ENCODE measurements at regions of chr10 and their contacts with region 1.

Region 1: GRCh38 chr10:117431160-117431559 is 55.9 kb upstream of the PDZD8 start:
- DNase-seq: peak; percentile 73
- H3K4me3 Mint-ChIP-seq: no peak overlapping the region
- H3K27ac Mint-ChIP-seq: no peak overlapping the region
- H3K4me1 Mint-ChIP-seq: no peaks in the 10 kb centered on the region
- H3K27me3 Mint-ChIP-seq: no peaks in the 10 kb centered on the region
- CTCF ChIP-seq: peak; percentile 36

Region 2: GRCh38 chr10:116892907-116893685 is 538.1 kb before region 1 on chr10:
- CTCF ChIA-PET with region 1: no interaction called
- POLR2A ChIA-PET with region 1: no interaction called
- intact Hi-C with region 1: no loop called
- DNase-seq: no peak
- H3K4me3 Mint-ChIP-seq: no peak overlapping the region
- H3K27ac Mint-ChIP-seq: no peak overlapping the region
- H3K4me1 Mint-ChIP-seq: peaks cover 19% of the 10 kb centered on the region
- H3K27me3 Mint-ChIP-seq: no peaks in the 10 kb centered on the region
- CTCF ChIP-seq: no peak

Region 3: DNA sequence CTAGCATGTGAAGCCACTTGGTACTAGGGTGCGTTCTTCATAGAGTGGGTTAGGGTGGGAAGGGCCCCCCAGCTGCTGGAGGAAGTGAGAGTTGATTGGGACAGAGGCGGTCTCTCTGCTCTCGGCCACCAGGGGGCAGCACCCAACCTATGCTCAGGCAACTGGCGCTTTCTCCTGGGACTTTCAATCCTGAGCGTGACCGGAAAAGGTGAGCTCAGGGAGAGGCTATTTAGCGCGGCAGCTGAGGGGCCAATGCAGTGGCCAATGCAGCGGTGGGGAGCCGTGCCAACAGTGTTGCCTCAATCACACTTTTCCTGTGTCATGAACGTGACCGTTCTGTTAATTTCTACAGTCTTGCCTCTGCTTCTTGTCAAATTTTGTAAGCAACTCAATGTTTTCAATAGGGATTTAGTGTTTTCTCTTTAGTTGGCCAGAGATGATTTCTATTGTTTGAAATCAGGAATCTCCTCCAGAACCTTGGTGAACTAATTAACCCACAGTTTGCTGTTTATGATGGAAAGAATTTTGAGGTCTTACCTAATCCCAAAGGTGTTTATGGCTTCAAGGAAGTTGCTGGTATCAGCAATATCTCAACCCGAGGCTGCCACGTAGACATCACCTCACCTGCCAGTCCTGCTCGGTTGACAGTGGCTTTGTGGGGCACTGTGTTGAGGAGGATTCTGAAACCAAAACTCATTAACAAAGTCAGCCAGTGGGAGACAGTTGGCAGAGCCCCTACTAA is 12.0 kb after region 1 on chr10:
- CTCF ChIA-PET with region 1: interaction called, 48 read pairs
- POLR2A ChIA-PET with region 1: interaction called, 5 read pairs
- intact Hi-C with region 1: no loop called
- DNase-seq: peak; percentile 97
- H3K4me3 Mint-ChIP-seq: peak overlapping the region; percentile 29
- H3K27ac Mint-ChIP-seq: no peak overlapping the region
- H3K4me1 Mint-ChIP-seq: peaks cover 29% of the 10 kb centered on the region
- H3K27me3 Mint-ChIP-seq: no peaks in the 10 kb centered on the region
- CTCF ChIP-seq: peak; percentile 86

Region 4: GRCh38 chr10:117472872-117473271 is 41.7 kb after region 1 on chr10:
- CTCF ChIA-PET with region 1: interaction called, 25 read pairs
- POLR2A ChIA-PET with region 1: no interaction called
- intact Hi-C with region 1: loop called (anchors 1 kb)
- DNase-seq: no peak
- H3K4me3 Mint-ChIP-seq: no peak overlapping the region
- H3K27ac Mint-ChIP-seq: no peak overlapping the region
- H3K4me1 Mint-ChIP-seq: peaks cover 7% of the 10 kb centered on the region
- H3K27me3 Mint-ChIP-seq: peaks cover 13% of the 10 kb centered on the region
- CTCF ChIP-seq: no peak

Region 5: GRCh38 chr10:117483056-117483604 is 52.0 kb after region 1 on chr10:
- CTCF ChIA-PET with region 1: interaction called, 25 read pairs
- POLR2A ChIA-PET with region 1: no interaction called
- intact Hi-C with region 1: loop called (anchors 1 kb)
- DNase-seq: peak; percentile 17
- H3K4me3 Mint-ChIP-seq: no peak overlapping the region
- H3K27ac Mint-ChIP-seq: peak overlapping the region; percentile 33
- H3K4me1 Mint-ChIP-seq: peaks cover 20% of the 10 kb centered on the region
- H3K27me3 Mint-ChIP-seq: no peaks in the 10 kb centered on the region
- CTCF ChIP-seq: no peak

Region 6: GRCh38 chr10:117590101-117590875 is 159.1 kb after region 1 on chr10:
- CTCF ChIA-PET with region 1: no interaction called
- POLR2A ChIA-PET with region 1: no interaction called
- intact Hi-C with region 1: no loop called
- DNase-seq: no peak
- H3K4me3 Mint-ChIP-seq: no peak overlapping the region
- H3K27ac Mint-ChIP-seq: no peak overlapping the region
- H3K4me1 Mint-ChIP-seq: no peaks in the 10 kb centered on the region
- H3K27me3 Mint-ChIP-seq: no peaks in the 10 kb centered on the region
- CTCF ChIP-seq: no peak

Region 7: DNA sequence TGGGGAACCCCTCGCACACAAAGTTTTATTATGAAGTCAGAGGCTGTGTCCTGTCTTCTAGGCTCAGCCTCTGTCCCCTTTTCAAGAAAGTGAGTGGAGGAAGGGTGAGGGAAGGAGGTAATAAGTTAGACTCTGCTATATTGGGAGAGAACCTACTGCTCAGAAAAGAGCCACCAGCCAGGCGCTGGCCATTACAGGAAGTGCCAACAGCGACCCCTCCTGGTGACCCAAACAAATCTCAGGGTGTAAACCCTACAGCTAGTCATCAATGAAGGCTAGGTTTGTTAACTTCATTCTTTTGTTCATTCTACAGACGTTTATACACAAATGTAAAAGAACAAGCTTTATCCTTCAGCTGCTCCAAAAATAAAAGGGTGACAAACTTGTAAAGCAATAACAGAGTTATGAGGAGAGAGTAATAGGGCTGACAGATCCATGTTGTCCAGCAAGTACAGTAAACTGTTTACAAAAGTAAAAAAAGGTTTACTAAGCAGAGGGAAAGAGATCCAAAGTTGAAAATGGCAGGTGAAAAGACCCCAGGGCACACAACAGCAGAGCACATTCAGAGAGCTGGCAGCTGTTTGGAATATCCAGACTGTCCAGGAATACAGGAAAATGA is 828.2 kb after region 1 on chr10:
- CTCF ChIA-PET with region 1: interaction called, 7 read pairs
- POLR2A ChIA-PET with region 1: no interaction called
- intact Hi-C with region 1: loop called (anchors 5 kb)
- DNase-seq: peak; percentile 56
- H3K4me3 Mint-ChIP-seq: no peak overlapping the region
- H3K27ac Mint-ChIP-seq: no peak overlapping the region
- H3K4me1 Mint-ChIP-seq: no peaks in the 10 kb centered on the region
- H3K27me3 Mint-ChIP-seq: peaks cover 16% of the 10 kb centered on the region
- CTCF ChIP-seq: peak; percentile 74